T-cell (primary cell): ENCODE measurements at regions of chr11 and their contacts with region 1.

Region 1: GRCh38 chr11:69242266-69242930 is 51.6 kb upstream of the MYEOV start:
- DNase-seq: peak in 6 of 35 experiments; percentile 6 to 24 (median 8)
- ATAC-seq: peak in 1 of 4 experiments; percentile 67
- H3K4me3 ChIP-seq: no peak overlapping the region
- H3K4me3 Mint-ChIP-seq: no peak overlapping the region
- H3K27ac ChIP-seq: no peak overlapping the region
- H3K27ac Mint-ChIP-seq: peak overlapping the region; percentile 50 to 74
- H3K4me1 ChIP-seq: peaks cover 7% of the 10 kb centered on the region in 2 experiments
- H3K4me1 Mint-ChIP-seq: peaks cover 11 to 15% (median 13%) of the 10 kb centered on the region in 3 donors
- H3K27me3 ChIP-seq: peaks cover 0 to 6% of the 10 kb centered on the region in 2 experiments
- H3K27me3 Mint-ChIP-seq: no peaks in the 10 kb centered on the region

Region 2: GRCh38 chr11:68950268-68950667 is 292.1 kb before region 1 on chr11:
- CTCF ChIA-PET with region 1: no interaction called
- POLR2A ChIA-PET with region 1: no interaction called
- DNase-seq: no peak
- ATAC-seq: no peak
- H3K4me3 ChIP-seq: no peak overlapping the region
- H3K4me3 Mint-ChIP-seq: no peak overlapping the region
- H3K27ac ChIP-seq: no peak overlapping the region
- H3K27ac Mint-ChIP-seq: no peak overlapping the region
- H3K4me1 ChIP-seq: no peaks in the 10 kb centered on the region
- H3K4me1 Mint-ChIP-seq: peaks cover under 1 to 6% (median 5%) of the 10 kb centered on the region in 3 donors
- H3K27me3 ChIP-seq: peaks cover 0 to 8% of the 10 kb centered on the region in 2 experiments
- H3K27me3 Mint-ChIP-seq: no peaks in the 10 kb centered on the region

Region 3: GRCh38 chr11:69231466-69232018 is 10.9 kb before region 1 on chr11:
- CTCF ChIA-PET with region 1: interaction called in 1 of 2 experiments, 11 read pairs
- POLR2A ChIA-PET with region 1: no interaction called
- DNase-seq: no peak
- ATAC-seq: no peak
- H3K4me3 ChIP-seq: no peak overlapping the region
- H3K4me3 Mint-ChIP-seq: no peak overlapping the region
- H3K27ac ChIP-seq: no peak overlapping the region
- H3K27ac Mint-ChIP-seq: no peak overlapping the region
- H3K4me1 ChIP-seq: no peaks in the 10 kb centered on the region
- H3K4me1 Mint-ChIP-seq: no peaks in the 10 kb centered on the region
- H3K27me3 ChIP-seq: peaks cover 0 to 56% of the 10 kb centered on the region in 2 experiments
- H3K27me3 Mint-ChIP-seq: peaks cover 10 to 25% of the 10 kb centered on the region in 2 donors